ENCODE measurements at regions of chr15 and their contacts with region 1.

Region 1: DNA sequence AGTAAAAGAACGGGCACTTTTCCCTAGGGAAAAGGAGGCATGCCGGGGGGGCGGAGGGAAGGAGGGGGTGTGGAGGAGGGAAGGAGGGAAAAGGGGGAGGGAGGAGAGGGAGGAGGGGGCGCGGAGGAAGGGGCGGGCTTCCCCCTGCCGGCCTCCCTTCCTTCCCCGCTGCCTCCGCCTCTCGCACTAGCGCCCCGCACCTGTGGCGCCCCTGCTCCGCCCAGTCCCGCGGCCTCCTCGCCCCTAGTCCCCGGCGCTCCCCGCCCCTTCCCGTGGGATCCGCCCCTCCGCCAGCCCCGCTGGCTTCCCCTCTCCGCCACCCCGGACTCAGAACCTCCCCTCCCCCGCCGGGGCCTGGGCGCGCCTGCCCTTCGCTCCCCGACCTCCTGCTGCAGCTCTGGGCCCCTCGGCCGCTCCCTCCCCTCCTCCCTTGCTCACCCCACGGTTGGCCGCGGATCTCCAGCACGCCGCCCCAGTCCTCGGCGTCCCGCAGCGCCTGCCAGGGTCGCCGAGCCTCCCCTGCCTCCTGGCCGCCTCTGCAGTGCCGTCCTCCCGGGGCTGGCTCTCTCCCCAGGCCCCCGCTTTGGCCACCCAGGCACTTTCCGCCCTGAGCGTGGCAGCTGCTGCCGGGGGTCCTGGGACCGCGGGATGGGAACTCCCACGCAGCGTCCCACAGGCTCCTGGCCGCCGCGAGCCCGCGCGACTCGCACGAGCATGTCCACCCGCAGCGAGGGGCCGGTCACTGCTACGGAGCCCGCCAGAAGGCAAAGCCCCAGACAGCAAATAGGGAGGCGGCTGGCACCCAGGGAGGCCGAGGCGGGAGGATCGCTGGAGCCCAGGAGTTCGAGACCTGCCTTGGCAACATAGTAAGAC is 147.4 kb downstream of the TJP1 start:
- DNase-seq: peak in 1 of 2 donors; percentile 69
- H3K4me3 ChIP-seq: peak overlapping the region; percentile 57 to 90
- H3K27ac ChIP-seq: no peak overlapping the region
- H3K4me1 ChIP-seq: peaks cover 0 to 3% of the 10 kb centered on the region in 2 donors
- H3K27me3 ChIP-seq: no peaks in the 10 kb centered on the region
- CTCF ChIP-seq: no peak

Region 2: GRCh38 chr15:29698030-29698701 is 23.3 kb after region 1 on chr15:
- intact Hi-C with region 1: no loop called
- DNase-seq: peak in 1 of 2 donors; percentile 40
- H3K4me3 ChIP-seq: no peak overlapping the region
- H3K27ac ChIP-seq: no peak overlapping the region
- H3K4me1 ChIP-seq: no peaks in the 10 kb centered on the region
- H3K27me3 ChIP-seq: no peaks in the 10 kb centered on the region
- CTCF ChIP-seq: no peak

Region 3: GRCh38 chr15:29925227-29926082 is 250.6 kb after region 1 on chr15:
- intact Hi-C with region 1: loop called (anchors 10 kb)
- DNase-seq: peak in 1 of 2 donors; percentile 71
- H3K4me3 ChIP-seq: no peak overlapping the region
- H3K27ac ChIP-seq: peak overlapping the region; percentile 37 to 46
- H3K4me1 ChIP-seq: peaks cover 3 to 5% of the 10 kb centered on the region in 2 donors
- H3K27me3 ChIP-seq: no peaks in the 10 kb centered on the region
- CTCF ChIP-seq: peak; percentile 55 to 63 (median 62)